ENCODE measurements at regions of chr11 and their contacts with region 1.

Region 1: DNA sequence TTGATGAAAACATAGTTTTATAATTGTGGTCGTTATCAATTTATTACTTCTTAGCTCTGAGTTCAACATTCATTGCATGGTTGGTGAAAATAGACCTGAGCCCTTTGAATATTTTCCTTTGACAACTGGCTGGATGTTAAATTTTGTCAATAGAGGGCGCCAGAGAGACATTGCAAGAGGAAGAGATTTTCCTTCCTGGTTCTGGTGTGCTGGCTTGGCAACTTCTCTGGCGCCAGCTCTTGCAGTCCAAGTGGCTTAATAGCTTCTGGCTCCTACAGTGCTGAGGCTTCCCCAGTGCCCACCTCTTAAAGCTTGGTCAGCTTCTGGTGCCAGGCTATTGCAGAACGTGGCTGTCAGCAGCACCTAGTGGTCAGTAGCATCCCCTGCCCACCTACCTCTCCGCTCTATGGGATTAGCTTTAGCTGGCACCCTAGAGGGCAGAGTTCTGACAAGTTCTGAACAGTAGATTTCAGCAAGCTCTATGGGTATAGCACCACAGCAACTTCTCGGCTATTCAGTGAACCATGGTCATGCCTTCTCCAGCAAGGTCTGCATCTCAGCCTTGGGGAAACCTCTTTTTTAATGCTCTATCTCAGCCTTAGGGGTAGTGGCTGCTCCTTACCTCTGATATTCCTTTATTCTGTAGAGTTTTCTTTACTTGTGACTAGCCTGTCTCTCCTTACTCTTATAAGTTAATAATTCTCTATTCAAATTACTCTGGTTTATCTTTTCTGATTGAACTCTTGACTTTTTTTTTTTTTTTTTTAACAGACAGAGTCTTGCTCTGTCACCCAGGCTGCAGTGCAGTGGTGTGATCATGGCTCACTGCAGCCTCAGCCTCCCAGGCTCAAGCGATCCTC is 59.4 kb downstream of the ACER3 start:
- DNase-seq: peak; percentile 60 to 87
- ATAC-seq: peak; percentile 96 to 98
- H3K4me3 ChIP-seq: no peak overlapping the region
- H3K27ac ChIP-seq: peak overlapping the region; percentile 6 to 74; a peak in 4 of 6 replicates
- H3K4me1 ChIP-seq: peaks cover 14% of the 10 kb centered on the region; the same call in 2 of the 3 replicates
- CTCF ChIP-seq: peak; percentile 99
- EP300 ChIP-seq: no peak
- POLR2A ChIP-seq: no peak
- RAD21 ChIP-seq: peak; percentile 75 to 91

Region 2: GRCh38 chr11:76799066-76799804 is 120.9 kb before region 1 on chr11:
- CTCF ChIA-PET with region 1: interaction called, 119 read pairs
- POLR2A ChIA-PET with region 1: interaction called, 4 read pairs
- DNase-seq: peak; percentile 83 to 89
- ATAC-seq: peak; percentile 36 to 69
- H3K4me3 ChIP-seq: peak overlapping the region; percentile 11; the same call in 2 of the 3 replicates
- H3K27ac ChIP-seq: peak overlapping the region; percentile 85 to 98
- H3K4me1 ChIP-seq: peaks cover 100% of the 10 kb centered on the region
- CTCF ChIP-seq: peak; percentile 83
- EP300 ChIP-seq: peak in 1 of 2 experiments; percentile 46; a peak in 2 of 5 replicates
- POLR2A ChIP-seq: no peak
- RAD21 ChIP-seq: peak; percentile 71 to 90

Region 3: GRCh38 chr11:76860539-76861475 is 59.3 kb before region 1 on chr11 and contains the start of gene ACER3:
- CTCF ChIA-PET with region 1: interaction called, 27 read pairs
- POLR2A ChIA-PET with region 1: interaction called, 3 read pairs
- DNase-seq: peak; percentile 88 to 90
- ATAC-seq: peak; percentile 96 to 98
- H3K4me3 ChIP-seq: peak within 1 kb of the TSS; percentile 77
- H3K27ac ChIP-seq: peak within 1 kb of the TSS; percentile 88 to 97
- H3K4me1 ChIP-seq: peaks cover 16% of the 10 kb centered on the region
- CTCF ChIP-seq: no peak; the same call in 2 of the 3 replicates
- EP300 ChIP-seq: no peak
- POLR2A ChIP-seq: peak; percentile 91
- RAD21 ChIP-seq: peak in 1 of 2 experiments; percentile 31; a peak in 1 of 5 replicates
- polyA plus RNA-seq, gene ACER3: 43.3 and 46.6 TPM in 2 replicates

Region 4: GRCh38 chr11:76955459-76956114 is 35.5 kb after region 1 on chr11:
- CTCF ChIA-PET with region 1: interaction called, 12 read pairs
- POLR2A ChIA-PET with region 1: no interaction called
- DNase-seq: no peak
- ATAC-seq: no peak
- H3K4me3 ChIP-seq: no peak overlapping the region
- H3K27ac ChIP-seq: no peak overlapping the region
- H3K4me1 ChIP-seq: no peaks in the 10 kb centered on the region
- CTCF ChIP-seq: no peak
- EP300 ChIP-seq: no peak
- POLR2A ChIP-seq: no peak
- RAD21 ChIP-seq: no peak

Region 5: GRCh38 chr11:77039491-77040400 is 119.6 kb after region 1 on chr11:
- CTCF ChIA-PET with region 1: interaction called, 72 read pairs
- POLR2A ChIA-PET with region 1: no interaction called
- DNase-seq: no peak
- ATAC-seq: peak; percentile 20 to 58; a peak in 3 of 6 replicates
- H3K4me3 ChIP-seq: no peak overlapping the region
- H3K27ac ChIP-seq: peak overlapping the region in 1 of 2 experiments; percentile 22; a peak in 1 of 6 replicates
- H3K4me1 ChIP-seq: peaks cover 28% of the 10 kb centered on the region
- CTCF ChIP-seq: peak; percentile 31; the same call in 2 of the 3 replicates
- EP300 ChIP-seq: no peak
- POLR2A ChIP-seq: no peak
- RAD21 ChIP-seq: peak; percentile 42 to 47; a peak in 4 of 5 replicates

Region 6: DNA sequence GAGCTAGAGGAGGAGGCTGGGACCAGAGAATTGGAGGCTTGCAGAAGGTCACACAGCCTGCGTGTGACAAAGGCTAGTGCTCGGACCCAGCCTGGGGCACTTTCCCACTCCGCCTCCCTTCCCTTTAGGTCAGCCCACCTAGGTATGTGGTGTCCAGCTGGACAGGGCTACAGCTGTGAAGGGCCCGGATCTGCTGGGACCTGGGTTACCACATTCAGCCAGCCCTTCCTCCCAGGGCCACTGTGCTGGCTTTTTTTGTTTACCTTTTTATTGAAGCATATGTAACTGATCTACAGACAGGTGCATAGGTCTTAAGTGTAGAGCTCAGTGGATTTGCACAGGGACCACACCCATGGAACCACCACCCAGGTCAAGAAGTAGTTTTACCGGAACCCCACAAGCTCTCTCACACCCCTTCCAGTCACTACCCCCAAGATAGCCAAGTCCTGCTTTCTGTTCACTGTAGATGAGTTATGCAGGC is 155.3 kb after region 1 on chr11:
- CTCF ChIA-PET with region 1: no interaction called
- POLR2A ChIA-PET with region 1: no interaction called
- DNase-seq: no peak
- ATAC-seq: no peak
- H3K4me3 ChIP-seq: no peak overlapping the region
- H3K27ac ChIP-seq: peak overlapping the region in 1 of 2 experiments; percentile 83; a peak in 4 of 6 replicates
- H3K4me1 ChIP-seq: peaks cover 45% of the 10 kb centered on the region
- CTCF ChIP-seq: no peak
- EP300 ChIP-seq: no peak
- POLR2A ChIP-seq: no peak
- RAD21 ChIP-seq: no peak

Region 7: DNA sequence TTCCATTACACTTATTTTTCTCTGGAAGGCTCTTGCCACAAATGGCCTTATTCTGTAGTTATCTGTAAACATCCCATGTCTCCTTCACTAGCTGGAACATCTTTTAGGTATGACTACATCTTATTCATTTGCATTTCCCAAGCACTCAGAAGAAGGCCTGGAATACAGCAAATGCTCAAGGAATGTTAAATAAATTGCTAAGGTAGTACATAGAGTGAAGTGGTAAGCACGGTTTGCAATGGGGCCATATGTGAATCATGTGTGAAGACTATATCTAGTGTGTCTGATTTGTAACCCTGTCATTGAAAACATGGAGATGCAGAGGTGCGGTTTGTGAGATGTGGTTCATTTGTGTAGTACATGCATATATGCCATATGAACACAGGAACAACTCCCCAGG is 347.8 kb after region 1 on chr11:
- CTCF ChIA-PET with region 1: no interaction called
- POLR2A ChIA-PET with region 1: no interaction called
- DNase-seq: no peak
- ATAC-seq: no peak
- H3K4me3 ChIP-seq: no peak overlapping the region
- H3K27ac ChIP-seq: no peak overlapping the region
- H3K4me1 ChIP-seq: no peaks in the 10 kb centered on the region
- CTCF ChIP-seq: no peak
- EP300 ChIP-seq: no peak
- POLR2A ChIP-seq: no peak
- RAD21 ChIP-seq: no peak

Region 8: GRCh38 chr11:77547863-77548551 is 627.9 kb after region 1 on chr11:
- CTCF ChIA-PET with region 1: no interaction called
- POLR2A ChIA-PET with region 1: no interaction called
- DNase-seq: peak; percentile 57 to 74
- ATAC-seq: peak; percentile 86 to 89
- H3K4me3 ChIP-seq: no peak overlapping the region
- H3K27ac ChIP-seq: no peak overlapping the region
- H3K4me1 ChIP-seq: no peaks in the 10 kb centered on the region
- CTCF ChIP-seq: peak; percentile 88
- EP300 ChIP-seq: no peak
- POLR2A ChIP-seq: no peak
- RAD21 ChIP-seq: peak; percentile 88 to 89